MCF 10A (cell line): ENCODE measurements at regions of chr10 and their contacts with region 1.

Region 1: DNA sequence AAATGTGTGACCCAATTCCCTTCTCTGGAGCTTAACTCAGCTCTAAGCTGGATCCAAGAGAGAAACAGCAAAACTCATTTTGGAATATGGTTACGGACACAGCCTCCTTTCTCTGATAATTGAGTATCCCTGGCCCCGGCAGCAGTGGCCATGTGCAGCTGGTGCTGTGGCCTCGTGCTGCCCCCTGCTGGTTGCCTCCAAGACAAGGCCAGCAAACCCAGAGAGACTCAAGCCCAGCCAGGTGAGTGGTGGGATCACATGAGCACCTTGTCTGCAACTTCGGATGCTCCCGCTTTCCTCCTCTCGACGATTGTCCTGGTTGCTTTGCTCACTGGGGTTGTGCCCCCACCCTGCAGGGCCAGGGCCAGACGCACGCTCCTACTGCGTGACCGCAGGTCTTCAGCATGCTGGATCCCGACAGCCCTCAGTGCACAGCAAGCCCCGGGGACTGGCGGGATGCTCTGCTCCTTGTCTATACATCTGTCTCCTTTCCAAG is 19.4 kb downstream of the SFTPD start:
- DNase-seq: peak; percentile 74
- H3K4me3 Mint-ChIP-seq: no peak overlapping the region
- H3K27ac Mint-ChIP-seq: no peak overlapping the region
- H3K4me1 Mint-ChIP-seq: peaks cover 14% of the 10 kb centered on the region
- H3K27me3 Mint-ChIP-seq: peaks cover 45% of the 10 kb centered on the region
- CTCF ChIP-seq: peak; percentile 91

Region 2: DNA sequence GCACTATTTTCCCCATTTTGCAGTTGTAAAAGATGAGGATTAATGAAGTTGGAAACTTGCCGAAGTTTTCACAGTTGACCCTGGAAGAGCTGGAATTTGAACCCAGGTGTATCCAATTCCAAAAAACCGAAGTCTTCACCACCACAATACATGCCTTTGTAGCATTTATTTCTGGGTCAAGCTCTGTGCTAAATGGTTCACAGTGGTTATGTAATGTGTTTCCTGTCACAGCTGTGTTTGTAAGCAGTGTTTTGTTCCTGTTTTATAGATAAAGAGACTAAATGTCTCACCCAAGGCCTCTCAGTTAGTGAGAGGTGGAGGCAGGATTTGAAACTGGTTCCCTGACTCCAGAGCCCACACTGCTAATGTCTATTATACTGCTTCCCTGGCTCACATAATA is 386.8 kb before region 1 on chr10:
- CTCF ChIA-PET with region 1: no interaction called
- POLR2A ChIA-PET with region 1: no interaction called
- intact Hi-C with region 1: loop called (anchors 2 kb)
- DNase-seq: no peak
- H3K4me3 Mint-ChIP-seq: no peak overlapping the region
- H3K27ac Mint-ChIP-seq: no peak overlapping the region
- H3K4me1 Mint-ChIP-seq: no peaks in the 10 kb centered on the region
- H3K27me3 Mint-ChIP-seq: peaks cover 37% of the 10 kb centered on the region
- CTCF ChIP-seq: no peak